ENCODE measurements at regions of chr19 and their contacts with region 1.

Region 1: DNA sequence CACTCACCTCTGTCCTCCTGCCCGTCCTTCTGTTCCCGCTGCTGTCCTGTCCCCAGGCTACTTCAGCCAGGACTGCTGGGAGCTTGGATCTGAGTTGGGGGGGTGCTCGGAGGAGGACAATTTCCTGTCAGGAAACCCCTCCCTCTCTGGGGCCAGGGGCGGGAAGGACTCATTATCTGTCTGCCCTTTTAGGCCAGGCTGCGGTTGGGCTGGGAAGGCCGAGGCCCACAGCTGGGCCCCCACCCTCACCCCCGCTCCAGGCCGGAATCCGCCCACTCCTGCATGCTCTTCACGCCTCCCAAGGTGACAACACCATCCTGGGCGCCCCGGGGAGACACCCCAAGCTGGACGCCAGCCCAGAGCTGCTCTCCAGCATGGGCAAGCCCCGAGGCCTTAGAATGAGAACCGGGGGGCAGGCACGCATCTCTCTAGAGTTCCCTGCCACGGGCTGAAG is at the start of gene EXOC3L2:
- DNase-seq: no peak
- ATAC-seq: no peak
- total RNA-seq, gene EXOC3L2: 4.9 TPM

Region 2: GRCh38 chr19:44539236-44539826 is 706.0 kb before region 1 on chr19:
- intact Hi-C with region 1: no loop called
- DNase-seq: no peak
- ATAC-seq: no peak

Region 3: GRCh38 chr19:45200568-45200994 is 44.8 kb before region 1 on chr19:
- intact Hi-C with region 1: loop called (anchors 5 kb)
- DNase-seq: no peak
- ATAC-seq: peak; percentile 80

Measured in sciatic nerve (tissue), 2 donors.